Activated T-helper 1 cell treated with anti-CD3 and anti-CD28 coated beads, Interleukin-12 subunit alpha, Interleukin-12 subunit beta, Interleukin-2, Interleukin-4 antibody, amounts not matched to agents 30 ng/mL and 10 ng/mL and 1 ng/mL, durations not matched to agents 14 hours and 24 hours and 36 hours (primary cell): ENCODE measurements at regions of chr6 and their contacts with region 1.

Region 1: DNA sequence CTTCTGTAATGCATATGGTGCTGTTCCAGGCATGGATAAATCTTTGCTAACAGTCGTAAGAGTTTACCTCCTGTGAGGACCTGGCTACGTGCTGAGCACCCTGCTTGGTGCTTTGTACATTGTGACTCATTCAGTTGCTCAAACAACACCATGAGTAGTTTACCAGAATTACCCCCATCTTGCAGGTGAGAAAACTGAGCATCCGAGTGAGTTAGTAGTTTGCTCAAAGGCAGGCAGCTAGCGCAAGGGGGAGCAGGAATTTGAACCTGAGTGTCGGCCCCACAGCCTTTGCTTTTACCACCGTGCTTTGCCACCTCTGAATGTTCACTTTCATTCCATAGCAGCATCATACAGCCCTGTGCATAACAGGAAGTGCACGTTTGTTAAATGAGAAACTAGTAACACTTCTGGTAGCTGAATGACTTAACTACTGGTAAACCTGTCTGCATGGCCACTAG is 121.9 kb downstream of the MTHFD1L start:
- DNase-seq: peak; percentile 57
- H3K4me3 Mint-ChIP-seq: peak overlapping the region; percentile 60
- H3K27ac Mint-ChIP-seq: peak overlapping the region; percentile 96
- H3K4me1 Mint-ChIP-seq: peaks cover 28% of the 10 kb centered on the region
- H3K27me3 Mint-ChIP-seq: no peaks in the 10 kb centered on the region

Region 2: GRCh38 chr6:150865406-150866146 is 121.8 kb before region 1 on chr6 and contains the start of gene MTHFD1L:
- intact Hi-C with region 1: loop called (anchors 1 kb)
- DNase-seq: peak; percentile 74
- H3K4me3 Mint-ChIP-seq: peak within 1 kb of the TSS; percentile 86
- H3K27ac Mint-ChIP-seq: peak within 1 kb of the TSS; percentile 91
- H3K4me1 Mint-ChIP-seq: peaks cover 38% of the 10 kb centered on the region
- H3K27me3 Mint-ChIP-seq: peaks cover 2% of the 10 kb centered on the region
- total RNA-seq, gene MTHFD1L: 121 and 125 TPM in 2 replicates

Region 3: GRCh38 chr6:151004415-151005024 is 17.1 kb after region 1 on chr6:
- intact Hi-C with region 1: loop called (anchors 1 kb)
- DNase-seq: no peak
- H3K4me3 Mint-ChIP-seq: no peak overlapping the region
- H3K27ac Mint-ChIP-seq: peak overlapping the region; percentile 65
- H3K4me1 Mint-ChIP-seq: peaks cover 52% of the 10 kb centered on the region
- H3K27me3 Mint-ChIP-seq: no peaks in the 10 kb centered on the region